ENCODE measurements at regions of chr7 and their contacts with region 1.

Region 1: GRCh38 chr7:48088559-48089045 is 463 bp upstream of the UPP1 start:
- DNase-seq: peak in 4 of 9 donors; percentile 73 to 89 (median 84)
- ATAC-seq: peak; percentile 15
- H3K4me3 ChIP-seq: peak overlapping the region; percentile 93
- H3K4me3 Mint-ChIP-seq: peak overlapping the region; percentile 80 to 95 (median 92)
- H3K27ac ChIP-seq: peak overlapping the region; percentile 81
- H3K27ac Mint-ChIP-seq: peak overlapping the region; percentile 81 to 98 (median 89)
- H3K4me1 ChIP-seq: peaks cover 24 to 72% of the 10 kb centered on the region in 2 donors
- H3K4me1 Mint-ChIP-seq: peaks cover 50 to 85% (median 74%) of the 10 kb centered on the region in 7 donors
- H3K27me3 ChIP-seq: no peaks in the 10 kb centered on the region
- H3K27me3 Mint-ChIP-seq: no peaks in the 10 kb centered on the region

Region 2: GRCh38 chr7:47914717-47915615 is 173.6 kb before region 1 on chr7:
- CTCF ChIA-PET with region 1: no interaction called
- POLR2A ChIA-PET with region 1: no interaction called
- intact Hi-C with region 1: no loop called
- DNase-seq: no peak
- ATAC-seq: no peak
- H3K4me3 ChIP-seq: no peak overlapping the region
- H3K4me3 Mint-ChIP-seq: no peak overlapping the region
- H3K27ac ChIP-seq: no peak overlapping the region
- H3K27ac Mint-ChIP-seq: no peak overlapping the region
- H3K4me1 ChIP-seq: no peaks in the 10 kb centered on the region
- H3K4me1 Mint-ChIP-seq: no peaks in the 10 kb centered on the region
- H3K27me3 ChIP-seq: no peaks in the 10 kb centered on the region
- H3K27me3 Mint-ChIP-seq: peaks cover 0 to 24% (median 5%) of the 10 kb centered on the region in 5 donors

Region 3: GRCh38 chr7:47979145-47979831 is 109.3 kb before region 1 on chr7 and contains the start of gene HUS1:
- CTCF ChIA-PET with region 1: no interaction called
- POLR2A ChIA-PET with region 1: interaction called, 5 read pairs
- intact Hi-C with region 1: loop called (anchors 1 kb)
- DNase-seq: peak; percentile 86 to 95 (median 90)
- ATAC-seq: peak; percentile 100
- H3K4me3 ChIP-seq: peak within 1 kb of the TSS; percentile 90
- H3K4me3 Mint-ChIP-seq: peak within 1 kb of the TSS; percentile 81 to 99 (median 94)
- H3K27ac ChIP-seq: peak within 1 kb of the TSS; percentile 94
- H3K27ac Mint-ChIP-seq: peak within 1 kb of the TSS; percentile 93 to 100 (median 99)
- H3K4me1 ChIP-seq: peaks cover 10 to 13% of the 10 kb centered on the region in 2 donors
- H3K4me1 Mint-ChIP-seq: peaks cover 16 to 38% (median 32%) of the 10 kb centered on the region in 7 donors
- H3K27me3 ChIP-seq: no peaks in the 10 kb centered on the region
- H3K27me3 Mint-ChIP-seq: no peaks in the 10 kb centered on the region
- total RNA-seq, gene HUS1: 39.2 to 84.0 (median 79.2) TPM

Region 4: GRCh38 chr7:48035301-48035966 is 53.2 kb before region 1 on chr7 and contains the start of gene C7orf57:
- CTCF ChIA-PET with region 1: no interaction called
- POLR2A ChIA-PET with region 1: interaction called, 7 read pairs
- intact Hi-C with region 1: loop called (anchors 1 kb)
- DNase-seq: peak; percentile 80 to 88 (median 83)
- ATAC-seq: peak; percentile 99
- H3K4me3 ChIP-seq: peak within 1 kb of the TSS; percentile 63
- H3K4me3 Mint-ChIP-seq: peak within 1 kb of the TSS; percentile 83 to 92 (median 88)
- H3K27ac ChIP-seq: peak within 1 kb of the TSS; percentile 34
- H3K27ac Mint-ChIP-seq: peak within 1 kb of the TSS in 7 of 9 donors; percentile 71 to 89 (median 80)
- H3K4me1 ChIP-seq: peaks cover 8 to 9% of the 10 kb centered on the region in 2 donors
- H3K4me1 Mint-ChIP-seq: peaks cover 4 to 14% (median 9%) of the 10 kb centered on the region in 7 donors
- H3K27me3 ChIP-seq: peaks cover 0 to 5% of the 10 kb centered on the region in 2 donors
- H3K27me3 Mint-ChIP-seq: peaks cover 9 to 60% (median 22%) of the 10 kb centered on the region in 5 donors
- total RNA-seq, gene C7orf57: 0.17 to 0.80 TPM in 2 of 5 experiments, not detected in the others

Region 5: DNA sequence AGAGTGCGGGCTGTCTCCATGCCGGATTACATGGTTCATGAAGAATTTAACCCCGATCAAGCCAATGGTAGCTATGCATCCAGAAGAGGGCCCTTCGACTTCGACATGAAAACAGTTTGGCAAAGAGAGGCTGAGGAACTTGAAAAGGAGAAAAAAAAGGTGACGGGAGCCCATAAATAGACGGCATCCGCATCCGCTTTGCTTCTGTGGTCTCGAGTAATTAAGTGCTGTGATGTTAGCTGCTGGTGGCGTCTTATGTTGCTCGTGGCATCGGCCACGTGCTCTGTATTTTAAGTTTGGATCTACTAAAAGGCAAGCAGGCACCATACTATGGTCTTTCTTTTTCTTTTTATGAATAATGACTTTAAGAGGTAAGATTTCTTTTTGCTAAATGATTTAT is 42.1 kb before region 1 on chr7:
- CTCF ChIA-PET with region 1: no interaction called
- POLR2A ChIA-PET with region 1: interaction called, 7 read pairs
- intact Hi-C with region 1: loop called in 1 of 2 experiments (anchors 1 kb)
- DNase-seq: peak in 7 of 9 donors; percentile 27 to 71 (median 51)
- ATAC-seq: peak; percentile 81
- H3K4me3 ChIP-seq: no peak overlapping the region
- H3K4me3 Mint-ChIP-seq: peak overlapping the region in 9 of 10 donors; percentile 8 to 72 (median 36)
- H3K27ac ChIP-seq: no peak overlapping the region
- H3K27ac Mint-ChIP-seq: peak overlapping the region in 4 of 9 donors; percentile 28 to 81 (median 72)
- H3K4me1 ChIP-seq: peaks cover 0 to 10% of the 10 kb centered on the region in 2 donors
- H3K4me1 Mint-ChIP-seq: peaks cover 8 to 34% (median 25%) of the 10 kb centered on the region in 7 donors
- H3K27me3 ChIP-seq: no peaks in the 10 kb centered on the region
- H3K27me3 Mint-ChIP-seq: no peaks in the 10 kb centered on the region

Region 6: GRCh38 chr7:48063985-48064384 is 24.6 kb before region 1 on chr7:
- CTCF ChIA-PET with region 1: no interaction called
- POLR2A ChIA-PET with region 1: interaction called, 6 read pairs
- intact Hi-C with region 1: loop called in 1 of 2 experiments (anchors 2 kb)
- DNase-seq: no peak
- ATAC-seq: no peak
- H3K4me3 ChIP-seq: no peak overlapping the region
- H3K4me3 Mint-ChIP-seq: no peak overlapping the region
- H3K27ac ChIP-seq: no peak overlapping the region
- H3K27ac Mint-ChIP-seq: peak overlapping the region in 1 of 9 donors; percentile 29
- H3K4me1 ChIP-seq: no peaks in the 10 kb centered on the region
- H3K4me1 Mint-ChIP-seq: peaks cover 0 to 3% (median 0%) of the 10 kb centered on the region in 7 donors
- H3K27me3 ChIP-seq: no peaks in the 10 kb centered on the region
- H3K27me3 Mint-ChIP-seq: peaks cover 0 to 15% (median 0%) of the 10 kb centered on the region in 5 donors

Region 7: DNA sequence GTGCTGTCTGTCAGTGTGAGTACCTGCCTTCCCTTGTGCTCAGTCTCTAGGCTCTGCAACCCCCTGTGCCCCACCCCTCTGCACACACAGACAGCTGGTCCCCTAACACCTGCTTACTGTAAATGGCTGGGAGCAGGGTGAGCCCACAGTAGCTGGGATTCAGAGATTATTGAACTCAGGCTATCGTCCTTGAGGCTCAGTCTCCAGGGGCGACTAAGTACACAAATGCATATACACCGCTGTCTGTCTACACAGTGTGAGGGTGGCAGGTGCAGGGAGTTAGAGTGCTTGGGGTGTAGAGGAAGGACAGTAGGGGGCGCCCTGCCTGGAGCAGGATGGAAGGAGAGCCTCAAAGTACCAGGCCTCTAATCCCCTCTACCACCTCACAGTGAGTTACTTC is 13.4 kb after region 1 on chr7:
- CTCF ChIA-PET with region 1: interaction called, 3 read pairs
- POLR2A ChIA-PET with region 1: interaction called, 10 read pairs
- intact Hi-C with region 1: loop called (anchors 1 kb)
- DNase-seq: no peak
- ATAC-seq: no peak
- H3K4me3 ChIP-seq: no peak overlapping the region
- H3K4me3 Mint-ChIP-seq: peak overlapping the region in 1 of 10 donors; percentile 45
- H3K27ac ChIP-seq: peak overlapping the region; percentile 11
- H3K27ac Mint-ChIP-seq: peak overlapping the region; percentile 53 to 95 (median 78)
- H3K4me1 ChIP-seq: peaks cover 31 to 50% of the 10 kb centered on the region in 2 donors
- H3K4me1 Mint-ChIP-seq: peaks cover 37 to 59% (median 50%) of the 10 kb centered on the region in 7 donors
- H3K27me3 ChIP-seq: no peaks in the 10 kb centered on the region
- H3K27me3 Mint-ChIP-seq: no peaks in the 10 kb centered on the region

Region 8: GRCh38 chr7:48130658-48131108 is 42.1 kb after region 1 on chr7:
- CTCF ChIA-PET with region 1: no interaction called
- POLR2A ChIA-PET with region 1: no interaction called
- intact Hi-C with region 1: no loop called
- DNase-seq: no peak
- ATAC-seq: no peak
- H3K4me3 ChIP-seq: no peak overlapping the region
- H3K4me3 Mint-ChIP-seq: no peak overlapping the region
- H3K27ac ChIP-seq: no peak overlapping the region
- H3K27ac Mint-ChIP-seq: no peak overlapping the region
- H3K4me1 ChIP-seq: no peaks in the 10 kb centered on the region
- H3K4me1 Mint-ChIP-seq: peaks cover 0 to 3% (median 0%) of the 10 kb centered on the region in 7 donors
- H3K27me3 ChIP-seq: no peaks in the 10 kb centered on the region
- H3K27me3 Mint-ChIP-seq: peaks cover 15 to 25% (median 22%) of the 10 kb centered on the region in 5 donors